Activated CD4-positive, alpha-beta T cell treated with anti-CD3 and anti-CD28 coated beads for 36 hours (primary cell): ENCODE measurements at regions of chr14 and their contacts with region 1.

Region 1: DNA sequence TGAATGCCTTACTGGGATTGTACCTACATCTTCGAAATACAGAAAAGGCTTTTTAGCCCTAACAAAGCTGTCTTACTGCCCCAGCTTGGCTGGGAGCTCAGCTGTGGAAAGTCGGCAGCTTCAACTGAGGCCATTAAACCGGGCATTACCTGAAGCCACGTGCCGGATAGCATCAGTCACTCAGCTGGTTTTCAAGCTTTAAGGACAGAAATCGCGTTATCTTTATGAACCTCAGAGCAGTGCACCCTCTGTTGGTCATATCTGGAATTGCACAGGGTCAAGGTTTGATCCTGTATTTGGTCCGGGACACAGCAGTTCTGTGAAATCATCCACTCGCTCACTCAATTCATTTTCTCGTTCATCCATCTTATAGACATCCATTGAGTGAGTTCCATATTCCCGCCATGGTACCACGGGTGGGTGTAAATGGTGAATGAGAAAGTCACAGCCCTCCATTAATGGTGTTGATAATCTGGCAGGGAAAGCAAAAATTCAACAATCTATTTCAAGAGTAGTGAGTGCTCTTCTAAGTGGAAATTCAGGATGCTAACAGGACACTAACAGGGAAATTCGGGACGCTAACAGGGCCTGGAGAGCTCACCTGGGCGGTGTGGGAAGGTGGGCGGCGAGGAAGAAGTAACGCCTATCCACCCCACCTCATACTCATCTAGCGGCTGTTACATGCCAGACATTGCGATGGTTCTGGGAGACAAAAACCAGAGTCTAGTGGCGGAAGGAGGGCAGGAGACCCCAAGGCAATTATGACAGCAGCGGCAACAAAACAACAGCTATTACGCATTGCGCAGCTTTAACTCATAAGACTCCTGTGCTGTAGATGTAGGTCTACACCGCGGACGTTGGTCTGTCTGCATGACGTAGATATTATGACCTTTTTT is 60.6 kb upstream of the TCL1A start:
- DNase-seq: peak; percentile 73
- ATAC-seq: no peak
- H3K4me3 Mint-ChIP-seq: no peak overlapping the region
- H3K27ac Mint-ChIP-seq: no peak overlapping the region
- H3K4me1 Mint-ChIP-seq: peaks cover 2% of the 10 kb centered on the region
- H3K27me3 Mint-ChIP-seq: peaks cover 4% of the 10 kb centered on the region

Region 2: GRCh38 chr14:95609387-95609990 is 165.0 kb before region 1 on chr14:
- CTCF ChIA-PET with region 1: interaction called, 4 read pairs
- POLR2A ChIA-PET with region 1: no interaction called
- intact Hi-C with region 1: loop called in 1 of 2 experiments (anchors 1 kb)
- DNase-seq: peak; percentile 35
- ATAC-seq: no peak
- H3K4me3 Mint-ChIP-seq: no peak overlapping the region
- H3K27ac Mint-ChIP-seq: no peak overlapping the region
- H3K4me1 Mint-ChIP-seq: no peaks in the 10 kb centered on the region
- H3K27me3 Mint-ChIP-seq: peaks cover 40% of the 10 kb centered on the region